ENCODE measurements at regions of chr10 and their contacts with region 1.

Region 1: GRCh38 chr10:58513188-58514110 is 777 bp downstream of the BICC1 start:
- DNase-seq: peak; percentile 3
- H3K4me3 ChIP-seq: peak overlapping the region; percentile 53
- H3K27ac ChIP-seq: no peak overlapping the region
- H3K4me1 ChIP-seq: no peaks in the 10 kb centered on the region
- H3K27me3 ChIP-seq: peaks cover 76% of the 10 kb centered on the region
- CTCF ChIP-seq: no peak

Region 2: GRCh38 chr10:58322072-58322834 is 191.2 kb before region 1 on chr10:
- CTCF ChIA-PET with region 1: no interaction called
- POLR2A ChIA-PET with region 1: no interaction called
- intact Hi-C with region 1: loop called (anchors 10 kb)
- DNase-seq: peak; percentile 50
- H3K4me3 ChIP-seq: no peak overlapping the region
- H3K27ac ChIP-seq: no peak overlapping the region
- H3K4me1 ChIP-seq: no peaks in the 10 kb centered on the region
- H3K27me3 ChIP-seq: no peaks in the 10 kb centered on the region
- CTCF ChIP-seq: no peak

Measured in A673 (cell line).